ENCODE measurements at regions of chrX and their contacts with region 1.

Region 1: DNA sequence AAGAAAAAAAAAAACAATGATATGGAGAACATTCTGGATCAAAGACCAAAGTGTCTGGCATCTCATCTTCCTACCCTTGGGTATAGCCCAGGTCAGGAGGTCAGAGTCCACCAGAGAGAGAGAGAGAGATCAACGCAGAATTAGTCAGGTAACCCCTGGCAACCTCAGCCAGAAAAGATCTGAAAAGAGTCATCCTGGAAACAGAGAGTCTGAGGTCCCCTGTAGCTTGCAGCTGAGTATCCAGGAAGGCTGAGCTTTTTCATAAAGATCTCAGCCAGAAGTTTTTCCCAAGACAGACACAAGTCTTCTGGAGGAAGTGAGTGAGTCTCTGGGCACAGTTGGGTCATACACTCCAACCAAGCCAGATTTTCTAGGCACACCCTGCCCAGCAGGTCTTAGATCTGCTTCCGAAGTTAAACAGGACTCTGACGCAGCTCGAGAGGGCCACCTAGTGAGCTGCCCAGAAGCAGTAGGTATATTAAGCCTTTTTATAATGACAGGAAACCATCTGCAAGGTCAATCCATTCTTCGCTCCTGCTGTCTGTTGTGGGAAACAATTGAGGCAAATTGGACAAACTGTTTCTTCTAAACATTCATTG is 35.7 kb downstream of the ACE2 start:
- DNase-seq: peak; percentile 87
- ATAC-seq: peak; percentile 96
- H3K4me3 ChIP-seq: no peak overlapping the region
- H3K27ac ChIP-seq: no peak overlapping the region
- H3K4me1 ChIP-seq: peaks cover 4% of the 10 kb centered on the region
- H3K27me3 ChIP-seq: no peaks in the 10 kb centered on the region
- CTCF ChIP-seq: peak; percentile 89

Region 2: DNA sequence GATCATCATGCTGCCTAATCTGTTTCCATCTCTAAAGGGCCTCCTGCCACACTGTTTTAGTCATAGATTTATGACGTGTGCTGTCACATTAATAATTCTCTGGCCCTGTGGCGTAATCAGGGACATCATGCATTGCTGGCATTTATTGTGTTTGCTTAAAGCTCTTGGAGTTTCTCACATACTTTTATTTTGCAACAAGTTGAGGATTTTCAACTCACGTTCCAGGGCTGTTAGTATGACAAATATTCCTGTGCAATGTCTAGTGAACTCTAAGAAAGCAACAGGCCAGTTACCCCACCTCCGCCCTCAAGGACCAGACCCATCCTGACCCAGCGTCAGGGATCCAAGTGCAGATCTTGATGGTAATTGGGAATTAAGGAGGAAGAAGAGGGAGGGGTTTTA is 222.0 kb before region 1 on chrX:
- CTCF ChIA-PET with region 1: interaction called, 10 read pairs
- POLR2A ChIA-PET with region 1: no interaction called
- intact Hi-C with region 1: no loop called
- DNase-seq: peak; percentile 60
- ATAC-seq: no peak
- H3K4me3 ChIP-seq: no peak overlapping the region
- H3K27ac ChIP-seq: no peak overlapping the region
- H3K4me1 ChIP-seq: peaks cover 5% of the 10 kb centered on the region
- H3K27me3 ChIP-seq: peaks cover 17% of the 10 kb centered on the region
- CTCF ChIP-seq: no peak

Region 3: DNA sequence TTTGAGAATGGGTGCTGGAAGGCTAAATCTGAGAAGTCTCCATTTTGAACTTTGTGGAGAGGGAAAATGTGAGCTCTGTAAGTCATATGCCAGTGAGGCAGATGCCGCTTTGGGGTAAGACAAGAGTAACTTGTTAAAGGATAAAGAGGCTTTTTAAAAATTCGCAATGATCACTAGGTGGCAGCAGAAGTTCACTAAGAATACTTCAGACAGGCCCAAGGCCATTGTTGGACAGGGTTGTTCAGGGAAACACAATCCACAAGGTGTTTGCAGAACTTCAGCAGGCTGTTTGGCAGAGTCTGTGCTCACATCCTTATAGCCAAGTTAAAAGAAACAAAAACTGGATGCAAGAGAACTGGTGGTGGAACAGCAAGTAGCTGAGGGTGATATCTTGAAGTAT is 216.0 kb before region 1 on chrX:
- CTCF ChIA-PET with region 1: no interaction called
- POLR2A ChIA-PET with region 1: no interaction called
- intact Hi-C with region 1: loop called (anchors 1 kb)
- DNase-seq: peak; percentile 83
- ATAC-seq: peak; percentile 81
- H3K4me3 ChIP-seq: no peak overlapping the region
- H3K27ac ChIP-seq: no peak overlapping the region
- H3K4me1 ChIP-seq: no peaks in the 10 kb centered on the region
- H3K27me3 ChIP-seq: no peaks in the 10 kb centered on the region
- CTCF ChIP-seq: peak; percentile 69

Region 4: DNA sequence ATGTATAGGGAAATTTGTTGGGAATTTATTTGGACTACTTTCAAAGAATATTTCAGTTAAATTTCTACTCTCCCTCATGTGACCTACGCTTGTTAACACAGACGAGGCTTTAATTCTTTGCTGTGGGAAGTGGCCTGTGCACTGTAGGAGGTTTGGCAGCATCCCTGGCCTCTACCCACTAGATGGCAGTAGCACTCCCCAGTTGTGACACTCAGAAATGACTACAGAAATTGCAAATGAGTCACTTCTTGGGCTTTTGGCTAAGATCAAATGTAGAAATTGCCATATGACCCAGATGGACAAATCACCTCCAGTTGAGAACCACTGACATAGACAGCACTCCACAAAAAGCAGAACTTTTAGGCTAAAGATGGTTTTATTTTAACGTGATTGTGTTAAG is 94.1 kb before region 1 on chrX:
- CTCF ChIA-PET with region 1: interaction called, 11 read pairs
- POLR2A ChIA-PET with region 1: no interaction called
- intact Hi-C with region 1: loop called (anchors 1 kb)
- DNase-seq: peak; percentile 77
- ATAC-seq: peak; percentile 76
- H3K4me3 ChIP-seq: no peak overlapping the region
- H3K27ac ChIP-seq: peak overlapping the region; percentile 9; the same call in 1 of the 2 replicates
- H3K4me1 ChIP-seq: peaks cover 30% of the 10 kb centered on the region
- H3K27me3 ChIP-seq: no peaks in the 10 kb centered on the region
- CTCF ChIP-seq: peak; percentile 80

Region 5: GRCh38 chrX:15493118-15493962 is 71.7 kb before region 1 on chrX and contains the start of gene PIR:
- CTCF ChIA-PET with region 1: interaction called, 4 read pairs
- POLR2A ChIA-PET with region 1: no interaction called
- intact Hi-C with region 1: loop called (anchors 1 kb)
- DNase-seq: peak; percentile 92
- ATAC-seq: peak; percentile 99
- H3K4me3 ChIP-seq: peak within 1 kb of the TSS; percentile 84
- H3K27ac ChIP-seq: peak within 1 kb of the TSS; percentile 81
- H3K4me1 ChIP-seq: peaks cover 16% of the 10 kb centered on the region
- H3K27me3 ChIP-seq: no peaks in the 10 kb centered on the region
- CTCF ChIP-seq: peak; percentile 70
- total RNA-seq, gene PIR: 48.6 and 50.8 TPM in 2 replicates

Region 6: GRCh38 chrX:15598036-15598435 is 33.0 kb after region 1 on chrX:
- CTCF ChIA-PET with region 1: no interaction called
- POLR2A ChIA-PET with region 1: no interaction called
- intact Hi-C with region 1: no loop called
- DNase-seq: no peak
- ATAC-seq: no peak
- H3K4me3 ChIP-seq: no peak overlapping the region
- H3K27ac ChIP-seq: no peak overlapping the region
- H3K4me1 ChIP-seq: peaks cover 5% of the 10 kb centered on the region; the same call in 1 of the 2 replicates
- H3K27me3 ChIP-seq: no peaks in the 10 kb centered on the region
- CTCF ChIP-seq: no peak

Region 7: DNA sequence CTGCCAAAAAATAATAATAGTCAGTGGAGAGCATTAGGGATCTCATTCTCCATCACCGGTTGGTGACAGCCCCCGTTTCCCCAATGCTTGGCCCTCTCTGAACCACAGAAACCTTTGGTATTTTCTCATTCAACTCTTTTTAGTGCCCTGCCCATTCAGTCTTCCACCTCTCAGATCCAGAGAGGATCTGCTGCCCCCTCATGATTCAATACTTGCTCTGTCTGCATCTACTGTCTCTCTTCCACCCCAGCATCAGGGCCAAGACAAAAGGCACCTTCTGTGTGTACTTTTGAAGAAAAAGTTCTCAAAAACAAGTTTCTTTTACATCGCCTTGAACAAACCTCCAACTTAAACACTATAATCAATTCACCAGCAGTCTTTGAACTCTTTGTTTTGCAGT is 80.2 kb after region 1 on chrX:
- CTCF ChIA-PET with region 1: interaction called, 9 read pairs
- POLR2A ChIA-PET with region 1: no interaction called
- intact Hi-C with region 1: loop called (anchors 1 kb)
- DNase-seq: peak; percentile 12
- ATAC-seq: peak; percentile 54; the same call in 1 of the 2 replicates
- H3K4me3 ChIP-seq: no peak overlapping the region
- H3K27ac ChIP-seq: no peak overlapping the region
- H3K4me1 ChIP-seq: no peaks in the 10 kb centered on the region
- H3K27me3 ChIP-seq: no peaks in the 10 kb centered on the region
- CTCF ChIP-seq: peak; percentile 39; the same call in 1 of the 2 replicates

Region 8: GRCh38 chrX:15674841-15675489 is 109.9 kb after region 1 on chrX:
- CTCF ChIA-PET with region 1: no interaction called
- POLR2A ChIA-PET with region 1: no interaction called
- intact Hi-C with region 1: loop called (anchors 2 kb)
- DNase-seq: peak; percentile 94
- ATAC-seq: peak; percentile 80
- H3K4me3 ChIP-seq: peak overlapping the region; percentile 87
- H3K27ac ChIP-seq: peak overlapping the region; percentile 96
- H3K4me1 ChIP-seq: peaks cover 44% of the 10 kb centered on the region
- H3K27me3 ChIP-seq: no peaks in the 10 kb centered on the region
- CTCF ChIP-seq: no peak

Region 9: DNA sequence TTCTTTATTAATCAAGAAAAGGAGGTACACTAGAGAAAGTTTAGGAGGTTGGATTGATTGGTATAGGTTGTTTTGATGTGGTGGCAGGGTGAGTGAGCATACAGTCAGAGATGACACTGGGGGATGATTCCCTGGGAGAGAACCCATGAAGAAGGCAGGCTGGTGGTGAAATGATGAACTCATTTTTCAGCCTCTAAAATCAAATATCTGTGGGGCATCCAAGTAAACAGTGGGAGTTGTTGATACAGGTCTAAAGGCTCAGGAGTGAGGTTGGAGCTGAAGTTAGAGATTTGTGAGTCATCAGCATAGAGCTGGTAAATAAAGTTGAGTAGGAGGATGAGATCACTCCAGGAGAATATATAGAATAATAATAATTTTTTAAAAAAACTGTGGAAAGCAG is 299.5 kb after region 1 on chrX:
- CTCF ChIA-PET with region 1: no interaction called
- POLR2A ChIA-PET with region 1: no interaction called
- intact Hi-C with region 1: no loop called
- DNase-seq: peak; percentile 64
- ATAC-seq: peak; percentile 91
- H3K4me3 ChIP-seq: no peak overlapping the region
- H3K27ac ChIP-seq: no peak overlapping the region
- H3K4me1 ChIP-seq: peaks cover 11% of the 10 kb centered on the region
- H3K27me3 ChIP-seq: no peaks in the 10 kb centered on the region
- CTCF ChIP-seq: no peak